Dendritic cell treated with granulocyte-macrophage colony-stimulating factor and Interleukin-4, amounts not matched to agents 40 ng/mL and 50 ng/mL, for 4 days (primary cell): ENCODE measurements at regions of chr9 and their contacts with region 1.

Region 1: DNA sequence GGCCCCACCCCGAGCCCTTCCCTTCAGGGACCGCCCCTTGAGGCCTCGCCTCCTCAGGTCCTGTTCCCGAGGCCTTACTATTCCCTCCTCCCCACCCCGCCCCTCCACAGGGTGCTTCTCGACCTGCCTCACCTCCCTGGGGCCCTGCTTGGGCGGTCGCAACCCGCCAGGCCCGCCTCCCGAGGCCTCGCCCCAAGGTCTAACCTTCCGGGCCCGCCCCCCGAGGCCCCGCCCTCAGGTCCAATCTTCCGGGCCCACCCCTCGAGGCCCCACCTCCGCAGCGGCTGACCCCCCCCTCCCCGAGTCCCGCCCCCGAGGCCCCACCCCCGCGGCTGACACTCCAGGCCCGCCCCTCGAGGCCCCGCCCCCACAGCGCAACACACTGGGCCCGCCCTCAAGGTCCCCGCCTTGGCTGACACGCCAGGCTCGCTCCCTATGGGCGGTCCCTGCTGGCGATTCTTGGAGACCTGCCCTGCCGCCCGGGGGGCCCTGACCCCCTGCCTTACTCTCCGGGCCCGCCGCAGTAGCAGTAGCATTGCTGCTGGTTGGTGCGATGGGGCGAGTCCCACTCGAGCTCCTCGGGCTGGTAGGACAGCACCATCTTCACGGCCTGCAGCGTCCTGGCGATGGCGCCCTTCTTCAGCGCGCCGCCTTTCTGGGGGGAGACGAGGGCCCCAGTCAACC is 8.2 kb downstream of the PHF19 start:
- H3K4me3 Mint-ChIP-seq: peak overlapping the region; percentile 94
- H3K27ac Mint-ChIP-seq: peak overlapping the region; percentile 85
- H3K4me1 Mint-ChIP-seq: peaks cover 21% of the 10 kb centered on the region
- H3K27me3 Mint-ChIP-seq: no peaks in the 10 kb centered on the region

Region 2: DNA sequence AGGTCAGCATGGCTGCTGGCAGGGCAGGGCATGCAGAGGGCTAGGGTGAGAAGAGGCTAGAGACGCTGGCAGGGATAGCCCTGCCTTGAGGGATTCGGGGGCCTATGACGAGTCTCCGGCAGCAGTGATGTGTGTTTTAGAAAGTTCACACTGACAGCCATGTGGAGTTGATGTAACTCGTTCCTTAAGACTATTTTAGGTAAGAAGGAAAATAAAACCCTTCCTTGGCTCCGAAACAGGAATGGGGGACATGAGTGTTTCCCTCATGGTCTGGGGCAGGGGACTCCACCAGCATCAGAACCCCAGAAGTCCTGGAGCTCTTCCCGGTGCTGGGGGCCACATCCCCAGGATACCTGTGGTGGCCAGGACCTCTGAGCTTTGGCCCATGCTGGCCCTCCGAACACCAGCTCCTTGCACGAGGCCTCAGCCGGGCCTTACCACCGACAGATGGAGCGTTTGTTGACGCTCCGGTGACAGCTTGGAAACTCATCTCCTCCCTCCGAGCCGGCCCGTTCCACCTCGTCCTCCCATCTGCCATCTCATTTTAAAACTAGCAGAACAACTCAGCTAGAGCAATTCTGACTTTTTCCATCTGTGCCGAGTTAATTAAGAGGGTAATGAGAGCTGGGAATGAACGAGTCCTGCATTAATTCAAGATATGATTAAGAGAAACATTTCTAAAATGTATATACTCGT is 626.6 kb before region 1 on chr9:
- intact Hi-C with region 1: no loop called
- H3K4me3 Mint-ChIP-seq: no peak overlapping the region
- H3K27ac Mint-ChIP-seq: no peak overlapping the region
- H3K4me1 Mint-ChIP-seq: no peaks in the 10 kb centered on the region
- H3K27me3 Mint-ChIP-seq: no peaks in the 10 kb centered on the region

Region 3: DNA sequence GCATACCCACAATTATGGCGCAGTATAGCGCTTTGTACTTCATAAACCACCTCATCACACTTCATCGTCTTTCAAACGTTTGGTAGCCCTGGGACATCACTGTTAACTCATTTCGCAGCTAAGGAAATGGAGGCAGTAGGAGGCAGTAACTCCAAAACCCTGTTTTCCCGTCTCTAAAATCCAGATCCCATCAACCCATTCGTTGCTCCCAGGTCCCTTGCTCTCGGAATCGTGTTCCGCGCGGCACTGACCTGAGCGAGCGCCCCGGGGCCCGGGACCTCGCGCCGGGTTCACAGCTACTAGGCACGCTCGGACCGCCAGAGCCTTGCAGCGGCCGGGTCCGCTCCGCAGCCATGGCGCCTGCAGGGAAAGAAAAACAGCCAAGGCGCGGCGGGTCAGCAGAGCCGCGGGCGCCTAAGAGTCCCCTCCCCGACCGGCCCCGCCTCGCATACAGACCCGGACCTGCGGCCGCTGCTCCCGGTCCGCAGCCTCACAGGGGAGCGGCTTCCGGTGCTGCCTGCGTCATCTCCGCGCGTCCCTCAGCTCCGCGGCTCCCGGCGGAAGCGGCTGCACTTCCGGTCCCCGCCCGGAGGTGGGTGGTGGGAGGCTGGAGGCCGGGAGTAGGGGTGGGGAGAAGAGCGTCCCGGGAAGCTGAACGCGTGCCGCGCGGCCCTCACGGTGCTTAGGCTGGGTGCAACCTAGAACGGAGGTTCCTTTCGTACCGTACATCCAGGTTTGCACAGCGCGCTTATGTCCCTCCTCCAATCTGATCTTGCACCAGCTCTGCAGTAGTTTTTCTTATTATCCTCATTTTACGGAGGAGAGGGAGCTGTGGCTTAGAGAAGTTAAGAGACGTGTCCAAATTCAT is 75.7 kb before region 1 on chr9 and contains the start of gene FBXW2:
- intact Hi-C with region 1: loop called (anchors 2 kb)
- H3K4me3 Mint-ChIP-seq: peak within 1 kb of the TSS; percentile 97
- H3K27ac Mint-ChIP-seq: peak within 1 kb of the TSS; percentile 94
- H3K4me1 Mint-ChIP-seq: peaks cover 44% of the 10 kb centered on the region
- H3K27me3 Mint-ChIP-seq: no peaks in the 10 kb centered on the region

Region 4: GRCh38 chr9:120842690-120843499 is 25.9 kb before region 1 on chr9 and contains the start of gene PSMD5:
- intact Hi-C with region 1: loop called (anchors 1 kb)
- H3K4me3 Mint-ChIP-seq: peak within 1 kb of the TSS; percentile 97
- H3K27ac Mint-ChIP-seq: peak within 1 kb of the TSS; percentile 100
- H3K4me1 Mint-ChIP-seq: peaks cover 53% of the 10 kb centered on the region
- H3K27me3 Mint-ChIP-seq: no peaks in the 10 kb centered on the region

Region 5: DNA sequence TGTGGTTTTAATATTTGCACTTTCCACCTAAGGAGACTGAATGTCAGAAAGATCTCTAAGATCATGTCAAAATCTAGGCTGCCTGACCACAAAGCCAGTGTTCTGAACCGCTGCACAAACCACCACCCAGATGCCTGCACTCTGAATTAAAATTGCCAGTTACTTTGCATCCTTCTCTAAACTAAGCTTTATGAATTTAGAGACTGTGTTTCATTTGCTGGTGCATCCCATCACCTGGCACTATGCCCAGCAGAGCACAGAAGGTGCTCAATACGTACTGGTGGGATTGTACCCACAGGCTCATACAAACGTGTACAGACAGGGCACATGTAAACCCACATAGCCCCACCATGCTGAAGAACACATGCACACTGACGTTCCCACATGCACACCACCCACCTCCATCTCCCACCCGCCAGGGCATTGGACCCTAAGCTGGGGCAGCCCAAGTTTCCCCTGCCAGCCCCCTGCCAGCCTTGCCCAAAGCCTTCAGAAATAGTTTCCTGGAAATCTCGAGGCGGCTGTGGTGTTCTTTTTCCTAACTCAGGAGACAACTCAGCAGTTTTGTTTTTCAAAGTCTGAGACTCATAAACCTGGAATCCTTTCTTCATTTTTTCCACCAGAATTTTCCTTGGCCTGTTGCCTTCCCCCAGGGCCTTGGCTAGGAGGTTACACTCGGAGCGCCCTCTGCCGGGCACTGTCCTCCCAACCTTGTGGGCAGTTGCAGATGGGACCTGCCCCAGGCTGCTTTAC is 67.4 kb after region 1 on chr9:
- intact Hi-C with region 1: loop called (anchors 2 kb)
- H3K4me3 Mint-ChIP-seq: no peak overlapping the region
- H3K27ac Mint-ChIP-seq: peak overlapping the region; percentile 85
- H3K4me1 Mint-ChIP-seq: peaks cover 49% of the 10 kb centered on the region
- H3K27me3 Mint-ChIP-seq: no peaks in the 10 kb centered on the region